HepG2 (cell line): ENCODE measurements at regions of chr6 and their contacts with region 1.

Region 1: GRCh38 chr6:37169496-37170272 is at the start of gene PIM1:
- DNase-seq: peak; percentile 98
- ATAC-seq: peak; percentile 75
- H3K4me3 ChIP-seq: peak within 1 kb of the TSS; percentile 98 to 100 (median 99)
- H3K27ac ChIP-seq: peak within 1 kb of the TSS; percentile 91
- H3K4me1 ChIP-seq: peaks cover 60% of the 10 kb centered on the region
- H3K27me3 ChIP-seq: no peaks in the 10 kb centered on the region; a peak in 1 of 5 replicates
- CTCF ChIP-seq: peak; percentile 41
- EP300 ChIP-seq: peak; percentile 56 to 95; a peak in 3 of 4 replicates
- POLR2A ChIP-seq: peak; percentile 69 to 88
- RAD21 ChIP-seq: peak; percentile 64
- total RNA-seq, gene PIM1: 19.1 and 29.4 TPM in 2 replicates

Region 2: DNA sequence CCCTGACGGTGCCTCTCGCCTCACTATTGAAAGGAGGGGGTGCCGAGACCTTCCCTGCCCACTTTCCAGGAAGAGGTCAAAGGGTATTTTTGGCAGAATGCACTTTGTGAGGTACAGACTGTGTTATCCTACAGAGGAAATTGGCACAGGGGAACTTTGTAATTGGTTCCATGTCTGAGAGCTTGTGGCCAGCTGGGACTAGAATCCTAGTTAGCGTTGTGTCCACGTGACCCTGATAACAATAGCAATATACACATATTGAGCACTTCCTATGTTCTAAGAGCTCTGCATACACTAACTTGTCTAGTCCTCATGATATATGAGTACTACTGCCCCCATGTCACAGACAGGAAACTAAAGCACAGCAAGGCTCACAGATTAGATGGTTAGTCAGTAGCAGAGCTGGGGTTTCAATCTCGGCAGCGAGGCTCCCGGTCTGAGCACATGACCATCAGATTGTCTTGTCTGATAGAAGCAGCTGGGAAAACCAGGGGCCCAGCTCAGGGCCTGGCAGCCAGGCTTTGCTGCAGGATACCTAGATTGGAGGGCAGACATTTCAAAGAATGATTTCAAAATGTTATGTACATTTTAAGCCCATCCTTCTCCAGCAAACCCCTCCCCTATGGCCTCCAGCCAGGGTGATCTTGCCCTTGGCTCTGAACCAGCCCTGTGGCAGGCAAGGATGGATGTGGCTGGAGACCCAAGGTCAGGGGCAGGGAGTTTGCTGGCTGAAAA is 1038.0 kb before region 1 on chr6:
- CTCF ChIA-PET with region 1: no interaction called
- POLR2A ChIA-PET with region 1: no interaction called
- in situ Hi-C with region 1: no loop called
- intact Hi-C with region 1: no loop called
- DNase-seq: peak; percentile 84
- ATAC-seq: peak; percentile 22
- H3K4me3 ChIP-seq: peak overlapping the region; percentile 75 to 92 (median 75)
- H3K27ac ChIP-seq: peak overlapping the region; percentile 90
- H3K4me1 ChIP-seq: peaks cover 66% of the 10 kb centered on the region
- H3K27me3 ChIP-seq: no peaks in the 10 kb centered on the region
- CTCF ChIP-seq: no peak
- EP300 ChIP-seq: peak in 1 of 2 experiments; percentile 57; a peak in 1 of 4 replicates
- POLR2A ChIP-seq: no peak; a peak in 1 of 4 replicates
- RAD21 ChIP-seq: no peak

Region 3: DNA sequence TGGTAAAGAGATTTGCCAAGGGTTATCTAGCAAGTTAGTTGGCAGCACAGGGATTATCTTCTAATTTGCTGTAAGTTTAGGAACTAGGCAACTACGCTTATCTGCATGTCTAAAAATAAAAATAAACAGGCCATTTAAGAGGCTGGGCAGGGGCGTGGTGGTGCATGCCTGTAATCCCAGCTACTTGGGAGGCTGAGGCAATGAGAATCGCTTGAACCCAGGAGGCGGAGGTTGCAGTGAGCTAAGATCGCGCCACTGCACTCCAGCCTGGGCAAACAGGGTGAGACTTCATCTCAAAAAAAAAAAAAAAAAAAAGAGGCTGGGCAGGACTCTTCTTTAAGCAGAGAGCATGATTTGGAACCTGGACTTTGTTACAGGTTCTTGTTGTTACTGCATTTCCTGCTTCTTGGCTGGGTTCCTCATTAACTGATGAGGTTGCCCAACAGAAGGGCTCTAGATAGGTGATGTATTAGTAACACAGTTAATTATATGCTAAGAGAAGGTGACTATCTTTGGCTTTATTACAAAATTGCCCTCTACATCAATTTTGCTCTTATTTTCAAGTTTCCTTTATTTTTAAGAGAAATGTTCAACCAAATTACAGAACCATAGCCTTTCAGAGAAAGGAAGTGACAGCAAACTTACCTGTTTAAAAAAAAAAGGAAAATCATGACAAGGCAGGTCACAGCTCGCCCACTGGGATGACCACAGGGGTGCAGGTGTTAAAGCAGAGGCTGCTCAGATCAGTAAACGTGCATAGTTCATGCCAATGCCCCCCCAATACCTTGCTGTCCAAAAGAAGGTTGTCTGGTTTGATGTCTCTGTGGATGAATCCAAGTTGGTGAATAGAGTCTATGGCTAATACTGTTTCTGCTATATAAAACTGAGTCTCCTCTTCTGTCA is 654.9 kb before region 1 on chr6:
- CTCF ChIA-PET with region 1: no interaction called
- POLR2A ChIA-PET with region 1: no interaction called
- in situ Hi-C with region 1: no loop called
- intact Hi-C with region 1: no loop called
- DNase-seq: peak; percentile 30
- ATAC-seq: peak; percentile 68
- H3K4me3 ChIP-seq: no peak overlapping the region
- H3K27ac ChIP-seq: peak overlapping the region; percentile 34
- H3K4me1 ChIP-seq: peaks cover 31% of the 10 kb centered on the region
- H3K27me3 ChIP-seq: no peaks in the 10 kb centered on the region
- CTCF ChIP-seq: no peak
- EP300 ChIP-seq: peak in 1 of 2 experiments; percentile 24; a peak in 1 of 4 replicates
- POLR2A ChIP-seq: no peak
- RAD21 ChIP-seq: no peak

Region 4: GRCh38 chr6:37051138-37052026 is 118.3 kb before region 1 on chr6:
- CTCF ChIA-PET with region 1: interaction called, 72 read pairs
- POLR2A ChIA-PET with region 1: interaction called, 119 read pairs
- in situ Hi-C with region 1: loop called (anchors 5 kb)
- intact Hi-C with region 1: loop called (anchors 1 kb)
- DNase-seq: peak; percentile 70
- ATAC-seq: peak; percentile 82
- H3K4me3 ChIP-seq: peak overlapping the region in 2 of 3 experiments; percentile 12 to 64; a peak in 3 of 6 replicates
- H3K27ac ChIP-seq: no peak overlapping the region
- H3K4me1 ChIP-seq: peaks cover 78% of the 10 kb centered on the region
- H3K27me3 ChIP-seq: peaks cover 2 to 17% of the 10 kb centered on the region in 2 experiments; a peak in 4 of 5 replicates
- CTCF ChIP-seq: peak; percentile 100
- EP300 ChIP-seq: no peak
- POLR2A ChIP-seq: no peak
- RAD21 ChIP-seq: peak; percentile 100

Region 5: DNA sequence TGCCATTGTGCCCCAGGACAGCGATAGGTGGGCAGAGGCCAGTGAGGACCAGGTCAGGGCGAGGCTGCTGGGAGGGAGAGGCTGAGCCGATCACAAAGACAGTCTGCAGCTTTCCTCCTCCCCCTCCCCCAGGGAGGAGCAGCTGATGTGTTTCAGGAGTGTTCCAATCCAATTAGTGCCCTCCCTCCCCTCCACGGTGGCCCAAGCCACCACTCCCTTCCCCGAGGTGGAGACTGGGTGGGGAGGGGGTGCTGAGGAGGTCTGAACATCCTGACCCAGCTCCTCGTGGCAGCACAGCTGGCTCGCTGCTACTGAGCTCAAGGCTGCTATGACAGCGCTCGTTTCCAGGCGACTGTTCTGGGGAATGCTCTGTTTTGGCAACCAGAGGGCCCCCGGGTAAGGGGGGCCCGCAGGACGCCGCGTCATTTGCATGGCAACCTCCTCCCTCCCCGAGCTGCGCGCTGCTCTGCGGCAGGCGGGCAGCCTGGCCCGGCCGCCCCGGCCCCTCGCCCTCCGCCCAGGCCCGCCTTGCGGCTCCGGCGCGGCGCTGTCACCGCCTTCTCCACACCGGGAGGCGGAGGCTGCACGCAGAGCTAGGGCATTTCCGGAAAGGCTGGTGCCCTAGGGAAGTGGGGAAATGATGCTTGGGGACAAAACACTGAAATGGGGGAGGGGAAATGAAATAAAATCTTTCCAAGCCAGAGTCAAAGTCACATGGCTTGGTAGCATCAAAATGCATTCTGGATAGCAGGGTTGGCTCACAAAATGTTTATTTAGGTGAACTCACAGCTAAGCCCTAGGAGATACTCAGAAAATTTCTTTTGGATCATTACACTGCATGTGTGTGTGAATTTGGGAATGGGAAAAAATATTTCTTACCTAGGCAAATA is 67.2 kb before region 1 on chr6:
- CTCF ChIA-PET with region 1: interaction called, 3 read pairs
- POLR2A ChIA-PET with region 1: interaction called, 132 read pairs
- in situ Hi-C with region 1: no loop called
- intact Hi-C with region 1: loop called (anchors 1 kb)
- DNase-seq: peak; percentile 92
- ATAC-seq: peak; percentile 82
- H3K4me3 ChIP-seq: peak overlapping the region; percentile 19 to 69 (median 54)
- H3K27ac ChIP-seq: peak overlapping the region; percentile 89
- H3K4me1 ChIP-seq: peaks cover 87% of the 10 kb centered on the region
- H3K27me3 ChIP-seq: no peaks in the 10 kb centered on the region
- CTCF ChIP-seq: peak; percentile 38; the same call in 1 of the 2 replicates
- EP300 ChIP-seq: peak; percentile 50 to 95; a peak in 3 of 4 replicates
- POLR2A ChIP-seq: peak; percentile 43 to 69; a peak in 2 of 4 replicates
- RAD21 ChIP-seq: peak; percentile 81

Region 6: DNA sequence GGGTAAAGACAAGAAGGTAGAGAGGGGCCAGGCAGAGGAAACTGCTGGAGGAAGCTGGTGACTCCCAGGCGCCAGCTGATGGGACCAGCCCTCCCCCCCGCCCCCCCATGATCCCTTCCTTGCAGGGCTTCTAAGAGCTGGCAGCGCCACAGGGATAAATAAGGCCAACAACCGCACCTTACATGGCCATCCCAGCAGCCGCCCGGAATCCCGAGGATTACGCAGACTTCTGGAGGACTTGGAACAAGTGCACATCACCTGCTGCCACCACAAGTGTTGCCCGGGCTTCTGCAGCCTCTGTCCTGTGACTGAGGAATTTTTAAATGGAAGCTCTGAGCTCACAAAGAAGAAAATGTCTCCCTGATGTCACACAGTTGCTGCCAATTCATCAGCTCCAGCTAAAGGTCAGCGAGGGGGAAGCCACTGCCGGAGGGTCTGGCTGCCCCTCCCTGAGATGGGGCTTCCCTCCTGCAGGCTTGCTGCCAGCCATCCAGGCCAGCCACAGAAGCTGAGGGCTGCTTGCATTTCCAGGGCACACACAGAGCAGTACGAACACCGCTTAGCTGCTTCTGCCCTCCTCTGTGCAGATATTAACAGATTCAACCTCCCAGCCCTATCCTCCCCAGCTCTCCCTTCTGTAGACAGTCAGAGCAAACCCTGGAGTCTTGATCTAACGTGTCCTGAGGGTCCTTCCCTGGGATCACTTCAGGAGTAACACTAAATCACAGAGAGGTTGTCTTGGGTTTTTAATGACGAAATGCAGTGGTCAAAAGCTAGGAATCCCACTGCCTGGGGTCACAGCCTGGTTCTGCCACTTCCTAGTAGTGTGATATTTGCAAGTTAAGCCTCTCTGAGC is 38.4 kb before region 1 on chr6:
- CTCF ChIA-PET with region 1: interaction called, 6 read pairs
- POLR2A ChIA-PET with region 1: interaction called, 234 read pairs
- in situ Hi-C with region 1: loop called (anchors 5 kb)
- intact Hi-C with region 1: loop called (anchors 1 kb)
- DNase-seq: peak; percentile 68
- ATAC-seq: peak; percentile 57
- H3K4me3 ChIP-seq: peak overlapping the region; percentile 39 to 68 (median 52)
- H3K27ac ChIP-seq: peak overlapping the region; percentile 95
- H3K4me1 ChIP-seq: peaks cover 90% of the 10 kb centered on the region
- H3K27me3 ChIP-seq: no peaks in the 10 kb centered on the region
- CTCF ChIP-seq: peak; percentile 42; the same call in 1 of the 2 replicates
- EP300 ChIP-seq: no peak
- POLR2A ChIP-seq: peak in 1 of 2 experiments; percentile 15; a peak in 1 of 4 replicates
- RAD21 ChIP-seq: peak; percentile 38

Region 7: GRCh38 chr6:37155394-37156312 is 14.0 kb before region 1 on chr6:
- CTCF ChIA-PET with region 1: no interaction called
- POLR2A ChIA-PET with region 1: interaction called, 82 read pairs
- in situ Hi-C with region 1: no loop called
- intact Hi-C with region 1: loop called (anchors 2 kb)
- DNase-seq: no peak
- ATAC-seq: peak; percentile 59; the same call in 2 of the 3 replicates
- H3K4me3 ChIP-seq: peak overlapping the region; percentile 21 to 49 (median 37)
- H3K27ac ChIP-seq: no peak overlapping the region
- H3K4me1 ChIP-seq: peaks cover 56% of the 10 kb centered on the region
- H3K27me3 ChIP-seq: no peaks in the 10 kb centered on the region
- CTCF ChIP-seq: no peak
- EP300 ChIP-seq: no peak
- POLR2A ChIP-seq: no peak
- RAD21 ChIP-seq: no peak

Region 8: DNA sequence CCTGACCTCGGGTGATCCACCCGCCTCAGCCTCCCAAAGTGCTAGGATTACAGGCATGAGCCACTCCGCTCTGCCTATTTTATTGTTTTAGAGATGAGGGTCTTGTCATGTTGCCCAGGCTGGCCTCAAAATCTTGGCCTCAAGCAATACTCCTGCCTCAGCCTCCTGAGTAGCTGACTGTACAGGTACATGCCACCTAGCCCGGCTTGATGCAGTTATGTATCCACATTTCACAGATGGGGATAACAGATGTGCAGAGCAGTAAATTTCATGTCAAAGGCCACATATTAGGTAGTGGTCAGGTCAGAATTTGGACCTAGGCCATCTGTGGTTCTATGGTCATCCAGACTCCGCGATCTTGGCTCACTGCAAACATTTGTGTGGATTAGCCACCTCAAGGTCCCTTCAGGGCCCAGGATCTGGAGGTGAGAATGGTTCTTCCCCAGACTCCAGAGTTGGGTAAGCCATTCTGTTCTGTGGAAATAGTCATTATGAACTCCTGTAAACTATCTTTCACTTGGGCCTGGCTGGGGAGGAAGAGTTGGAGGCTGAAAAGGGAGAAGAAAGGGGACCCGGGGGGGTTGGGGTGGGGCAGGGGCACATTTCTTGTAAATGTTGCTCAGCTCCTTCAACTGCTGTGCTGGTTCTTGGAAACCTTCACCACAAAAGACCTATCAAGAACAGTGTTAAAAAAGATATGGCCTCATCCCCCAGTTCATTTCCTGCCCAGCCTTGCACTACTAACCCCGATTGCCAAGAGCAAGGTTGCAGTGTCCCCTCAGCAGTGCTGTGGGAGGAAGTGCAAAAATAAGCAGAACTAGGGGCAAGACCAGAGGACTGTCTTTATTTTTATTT is 13.3 kb after region 1 on chr6:
- CTCF ChIA-PET with region 1: no interaction called
- POLR2A ChIA-PET with region 1: no interaction called
- in situ Hi-C with region 1: no loop called
- intact Hi-C with region 1: no loop called
- DNase-seq: no peak
- ATAC-seq: no peak; the same call in 2 of the 3 replicates
- H3K4me3 ChIP-seq: no peak overlapping the region
- H3K27ac ChIP-seq: no peak overlapping the region
- H3K4me1 ChIP-seq: peaks cover 5% of the 10 kb centered on the region; the same call in 1 of the 2 replicates
- H3K27me3 ChIP-seq: peaks cover 0 to 3% of the 10 kb centered on the region in 2 experiments; a peak in 1 of 5 replicates
- CTCF ChIP-seq: no peak
- EP300 ChIP-seq: no peak
- POLR2A ChIP-seq: no peak
- RAD21 ChIP-seq: no peak